ENCODE measurements at regions of chr14 and their contacts with region 1.

Region 1: DNA sequence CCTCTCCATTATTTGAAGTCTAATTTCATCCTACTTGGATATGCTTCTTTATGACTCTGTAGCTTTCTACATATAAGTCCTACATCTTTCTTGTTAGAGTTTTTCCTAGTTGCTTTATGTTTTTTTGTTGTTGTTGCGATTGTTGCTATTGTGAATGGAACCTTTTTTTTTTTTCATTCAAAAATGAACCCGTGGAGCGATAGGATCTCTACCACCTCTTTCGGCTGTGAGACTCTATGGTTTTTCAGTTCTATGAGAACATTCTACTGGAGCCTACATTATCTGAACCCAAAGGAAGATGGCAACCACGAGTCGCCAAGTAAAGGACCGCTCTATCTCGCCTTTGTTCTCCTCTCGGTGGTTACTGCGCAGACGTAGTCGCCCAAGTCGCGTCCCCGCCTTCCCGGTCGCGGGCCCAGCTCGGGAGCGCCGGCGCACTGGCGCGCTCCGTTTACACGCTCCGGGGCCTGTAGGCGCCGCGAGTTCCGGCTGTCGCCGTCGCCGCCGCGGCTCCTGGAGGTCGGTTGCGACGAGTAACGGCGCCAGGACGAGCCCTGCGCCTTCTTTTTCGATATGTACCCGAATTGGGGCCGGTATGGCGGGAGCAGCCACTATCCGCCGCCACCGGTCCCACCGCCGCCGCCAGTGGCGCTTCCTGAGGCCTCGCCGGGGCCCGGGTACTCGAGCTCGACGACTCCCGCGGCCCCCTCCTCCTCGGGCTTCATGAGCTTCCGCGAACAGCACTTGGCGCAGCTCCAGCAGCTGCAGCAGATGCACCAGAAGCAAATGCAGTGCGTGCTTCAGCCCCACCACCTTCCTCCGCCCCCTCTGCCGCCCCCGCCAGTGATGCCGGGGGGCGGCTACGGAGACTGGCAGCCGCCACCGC is at the start of gene YLPM1:
- DNase-seq: peak; percentile 97
- H3K4me3 ChIP-seq: peak within 1 kb of the TSS; percentile 59 to 92 (median 90)
- H3K27ac ChIP-seq: peak within 1 kb of the TSS; percentile 86
- H3K4me1 ChIP-seq: peaks cover 25% of the 10 kb centered on the region
- H3K27me3 ChIP-seq: no peaks in the 10 kb centered on the region
- CTCF ChIP-seq: peak; percentile 42 to 62
- POLR2A ChIP-seq: peak; percentile 86
- total RNA-seq, gene YLPM1: 81.0 and 85.7 TPM in 2 replicates

Region 2: GRCh38 chr14:74712499-74713394 is 50.4 kb before region 1 on chr14 and contains the starts of genes AREL1 and FCF1:
- CTCF ChIA-PET with region 1: no interaction called
- POLR2A ChIA-PET with region 1: no interaction called
- dilution Hi-C with region 1: no loop called
- intact Hi-C with region 1: loop called (anchors 1 kb)
- DNase-seq: peak; percentile 87
- H3K4me3 ChIP-seq: peak within 1 kb of the TSS; percentile 66 to 93 (median 92)
- H3K27ac ChIP-seq: peak within 1 kb of the TSS; percentile 37
- H3K4me1 ChIP-seq: peaks cover 15% of the 10 kb centered on the region
- H3K27me3 ChIP-seq: no peaks in the 10 kb centered on the region
- CTCF ChIP-seq: no peak
- POLR2A ChIP-seq: peak; percentile 75
- total RNA-seq, gene AREL1: 46.4 and 50.3 TPM in 2 replicates
- total RNA-seq, gene FCF1: 57.8 and 58.2 TPM in 2 replicates

Region 3: DNA sequence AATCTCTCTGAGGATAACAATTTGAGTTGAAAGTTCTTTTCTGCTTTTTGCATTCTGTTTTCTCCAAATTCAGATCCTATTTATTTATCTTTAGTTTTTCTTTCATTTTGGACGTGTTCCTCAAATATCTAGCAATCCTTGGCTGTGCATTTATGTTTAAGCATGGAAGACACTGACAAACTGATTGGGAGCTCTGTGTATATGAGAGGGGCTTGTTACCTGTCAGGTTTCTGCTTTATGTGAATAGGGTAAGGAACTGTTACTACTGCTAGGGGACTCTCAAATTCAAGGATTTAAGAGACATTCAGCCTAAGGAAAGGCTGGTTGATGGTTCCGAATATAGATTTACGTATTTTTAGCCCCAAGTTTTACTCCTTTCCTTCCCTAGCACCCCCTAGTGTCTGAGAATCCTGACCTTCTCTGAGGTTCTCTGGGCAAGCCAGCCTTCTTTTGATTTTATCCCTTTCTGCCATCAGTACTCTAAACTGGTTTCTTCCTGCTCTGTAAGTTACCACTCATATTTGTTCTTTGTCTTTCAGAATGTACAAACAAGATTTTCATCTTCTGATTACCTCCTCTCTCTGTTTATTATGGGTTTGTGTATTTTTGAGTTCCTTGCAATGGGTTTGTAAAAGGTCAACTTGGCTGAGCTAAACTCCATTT is 30.5 kb after region 1 on chr14:
- CTCF ChIA-PET with region 1: interaction called, 5 read pairs
- POLR2A ChIA-PET with region 1: no interaction called
- dilution Hi-C with region 1: no loop called
- intact Hi-C with region 1: loop called (anchors 1 kb)
- DNase-seq: peak; percentile 63
- H3K4me3 ChIP-seq: peak overlapping the region in 1 of 3 experiments; percentile 38
- H3K27ac ChIP-seq: peak overlapping the region; percentile 77
- H3K4me1 ChIP-seq: peaks cover 31% of the 10 kb centered on the region
- H3K27me3 ChIP-seq: no peaks in the 10 kb centered on the region
- CTCF ChIP-seq: peak; percentile 51 to 62
- POLR2A ChIP-seq: no peak